Heart left ventricle (tissue), 16 donors: ENCODE measurements at regions of chr17 and their contacts with region 1.

Region 1: GRCh38 chr17:31388770-31389661 is 2.5 kb upstream of the RAB11FIP4 start:
- DNase-seq: peak in 1 of 5 donors; percentile 18
- ATAC-seq: peak in 2 of 4 donors; percentile 45 to 51
- H3K4me3 ChIP-seq: no peak overlapping the region
- H3K27ac ChIP-seq: no peak overlapping the region
- H3K4me1 ChIP-seq: peaks cover 0 to 18% (median 7%) of the 10 kb centered on the region in 12 donors
- H3K27me3 ChIP-seq: peaks cover 9 to 41% (median 33%) of the 10 kb centered on the region in 9 donors
- CTCF ChIP-seq: peak; percentile 45 to 68 (median 59)
- POLR2A ChIP-seq: no peak

Region 2: DNA sequence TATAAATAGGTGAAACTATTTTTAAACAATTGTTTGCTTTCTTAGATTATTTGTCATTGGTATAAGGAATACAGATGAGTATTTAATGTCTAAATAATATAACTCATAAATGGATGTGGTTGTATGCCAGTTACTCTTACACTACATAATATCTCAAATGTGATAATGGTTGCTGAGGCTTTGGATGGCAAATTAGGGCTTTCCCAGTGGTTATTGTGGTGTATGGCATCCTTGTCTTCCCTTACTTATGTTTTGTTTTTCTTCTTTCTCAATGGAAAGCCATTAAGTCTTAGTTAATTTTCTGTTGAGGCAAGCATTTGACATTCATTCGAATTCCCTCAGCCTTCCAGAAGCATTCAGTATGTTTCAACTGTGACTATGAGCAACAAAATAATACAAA is 102.4 kb before region 1 on chr17:
- intact Hi-C with region 1: no loop called
- DNase-seq: no peak
- ATAC-seq: no peak
- H3K4me3 ChIP-seq: no peak overlapping the region
- H3K27ac ChIP-seq: no peak overlapping the region
- H3K4me1 ChIP-seq: peaks cover 0 to 5% (median 0%) of the 10 kb centered on the region in 12 donors
- H3K27me3 ChIP-seq: no peaks in the 10 kb centered on the region
- CTCF ChIP-seq: no peak
- POLR2A ChIP-seq: no peak

Region 3: DNA sequence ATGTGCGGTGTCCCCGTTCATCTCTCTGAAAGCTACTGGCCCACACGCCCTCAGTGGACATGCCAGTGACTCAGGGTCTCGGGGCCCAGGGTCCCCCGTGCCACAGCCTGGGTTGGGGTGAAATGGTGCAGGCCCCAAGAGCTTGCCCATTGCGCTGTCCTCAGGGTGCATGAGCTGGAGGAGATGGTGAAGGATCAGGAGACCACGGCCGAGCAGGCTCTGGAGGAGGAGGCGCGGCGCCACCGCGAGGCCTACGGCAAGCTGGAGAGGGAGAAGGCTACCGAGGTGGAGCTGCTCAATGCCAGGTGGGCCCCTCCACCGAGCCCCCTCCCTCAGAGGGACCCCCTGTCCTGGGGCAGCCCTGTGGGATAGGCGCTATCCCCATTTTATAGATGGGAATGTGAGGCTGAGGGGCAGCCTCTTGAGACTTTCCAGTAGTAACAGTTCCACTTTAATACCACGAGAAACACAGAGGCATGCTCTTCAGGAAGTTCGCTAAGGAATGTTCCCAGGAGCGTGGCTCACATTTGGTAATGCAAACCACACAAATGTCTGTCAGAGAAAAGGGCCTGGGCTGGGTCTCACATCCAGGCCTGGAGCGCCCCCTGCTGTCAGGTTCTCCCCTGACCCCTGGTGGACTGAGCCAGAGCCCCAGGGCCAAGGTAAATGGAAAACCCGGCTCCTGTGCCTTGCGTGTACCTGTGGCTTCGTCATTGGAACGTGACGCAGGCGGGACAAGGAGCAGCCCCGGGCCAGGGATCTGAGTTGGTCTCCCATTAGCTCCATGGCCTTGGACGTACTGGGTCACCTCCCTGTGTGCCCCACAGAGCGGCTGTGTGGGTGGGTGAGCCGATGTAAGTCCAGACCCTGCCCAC is 136.1 kb after region 1 on chr17:
- intact Hi-C with region 1: loop called in 6 of 10 experiments (anchors 1 to 5 kb)
- DNase-seq: peak; percentile 78 to 92 (median 82)
- ATAC-seq: peak; percentile 69 to 87 (median 83)
- H3K4me3 ChIP-seq: no peak overlapping the region
- H3K27ac ChIP-seq: no peak overlapping the region
- H3K4me1 ChIP-seq: peaks cover 0 to 12% (median 0%) of the 10 kb centered on the region in 12 donors
- H3K27me3 ChIP-seq: no peaks in the 10 kb centered on the region
- CTCF ChIP-seq: peak; percentile 83 to 94 (median 87)
- POLR2A ChIP-seq: no peak